ENCODE measurements at regions of chr3 and their contacts with region 1.

Region 1: DNA sequence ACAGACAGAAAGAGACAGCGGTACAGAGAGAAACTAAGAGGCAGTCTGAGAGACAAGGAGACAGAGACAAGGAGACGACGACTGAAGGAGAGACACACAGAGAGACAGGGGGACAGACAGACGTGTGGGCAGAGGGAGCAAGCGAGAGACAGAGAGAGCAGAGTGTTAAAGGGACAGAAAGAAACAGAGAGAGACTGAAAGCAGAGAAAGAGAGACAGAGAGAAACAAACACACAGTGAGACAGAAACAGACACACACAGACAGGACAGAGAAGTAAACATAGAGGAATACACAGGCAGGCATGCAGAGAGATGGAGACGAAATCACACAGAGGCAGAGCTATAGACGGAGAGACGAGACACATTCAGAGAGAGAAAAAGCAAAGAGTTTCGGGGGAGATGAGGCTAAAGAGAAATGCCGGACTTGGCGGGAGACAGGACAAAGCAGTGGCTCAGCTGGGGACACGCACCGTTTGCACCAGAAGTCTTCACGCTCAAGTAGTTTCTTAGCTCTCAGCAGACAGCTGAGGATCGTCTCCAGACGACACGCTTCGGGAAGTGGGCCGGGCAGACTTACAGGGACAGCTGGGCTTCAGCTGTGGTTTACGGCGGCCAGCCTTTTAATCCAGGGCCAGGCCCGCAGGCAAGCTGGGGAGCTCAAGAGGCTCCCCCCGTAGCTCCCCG is 56.0 kb upstream of the DLG1 start:
- DNase-seq: no peak
- H3K4me3 ChIP-seq: no peak overlapping the region
- H3K27ac ChIP-seq: no peak overlapping the region
- H3K4me1 ChIP-seq: no peaks in the 10 kb centered on the region
- H3K27me3 ChIP-seq: no peaks in the 10 kb centered on the region
- CTCF ChIP-seq: no peak

Region 2: GRCh38 chr3:197417441-197417840 is 63.0 kb after region 1 on chr3:
- CTCF ChIA-PET with region 1: no interaction called
- dilution Hi-C with region 1: loop called (anchors 5 kb)
- in situ Hi-C with region 1: no loop called
- intact Hi-C with region 1: no loop called
- DNase-seq: peak; percentile 38
- H3K4me3 ChIP-seq: no peak overlapping the region
- H3K27ac ChIP-seq: no peak overlapping the region
- H3K4me1 ChIP-seq: peaks cover 6% of the 10 kb centered on the region
- H3K27me3 ChIP-seq: no peaks in the 10 kb centered on the region
- CTCF ChIP-seq: no peak

Measured in mammary epithelial cell (primary cell).